PC-3 (cell line): ENCODE measurements at regions of chr5 and their contacts with region 1.

Region 1: GRCh38 chr5:78269088-78269703 is 25.3 kb downstream of the AP3B1 start:
- DNase-seq: peak; percentile 34
- ATAC-seq: peak; percentile 43; the same call in 1 of the 2 replicates
- H3K4me3 ChIP-seq: no peak overlapping the region
- H3K27ac ChIP-seq: no peak overlapping the region
- H3K4me1 ChIP-seq: no peaks in the 10 kb centered on the region
- H3K27me3 ChIP-seq: no peaks in the 10 kb centered on the region
- CTCF ChIP-seq: peak; percentile 57

Region 2: DNA sequence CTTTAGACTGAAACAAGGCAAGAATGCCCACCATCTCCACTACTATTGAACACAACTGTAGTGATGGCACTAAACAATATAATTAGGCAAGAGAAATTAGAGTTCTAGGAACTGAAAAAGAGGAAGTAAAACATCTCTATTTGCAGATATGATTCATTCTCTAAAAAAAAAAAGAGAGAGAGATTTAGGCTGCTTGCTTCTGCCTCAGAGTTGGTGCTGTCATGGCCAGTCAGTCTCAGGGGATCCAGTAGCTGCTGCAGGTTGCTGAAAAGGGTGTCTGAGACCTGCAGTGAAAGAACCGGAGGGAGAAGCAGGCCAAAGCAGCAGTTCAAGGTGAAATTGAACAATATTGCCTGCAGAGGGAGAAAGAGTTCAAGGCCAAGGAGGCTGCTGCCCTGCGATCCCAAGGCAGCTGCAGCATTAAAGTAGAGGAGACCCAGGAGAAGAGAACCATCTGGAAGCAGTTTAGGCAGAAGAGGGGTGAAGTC is 47.2 kb before region 1 on chr5:
- CTCF ChIA-PET with region 1: no interaction called
- POLR2A ChIA-PET with region 1: no interaction called
- intact Hi-C with region 1: loop called (anchors 2 kb)
- DNase-seq: peak; percentile 2
- ATAC-seq: peak; percentile 33; the same call in 1 of the 2 replicates
- H3K4me3 ChIP-seq: no peak overlapping the region
- H3K27ac ChIP-seq: no peak overlapping the region
- H3K4me1 ChIP-seq: no peaks in the 10 kb centered on the region
- H3K27me3 ChIP-seq: no peaks in the 10 kb centered on the region
- CTCF ChIP-seq: peak; percentile 29; the same call in 1 of the 2 replicates

Region 3: GRCh38 chr5:78235289-78235688 is 33.9 kb before region 1 on chr5:
- CTCF ChIA-PET with region 1: no interaction called
- POLR2A ChIA-PET with region 1: no interaction called
- intact Hi-C with region 1: no loop called
- DNase-seq: no peak
- ATAC-seq: no peak
- H3K4me3 ChIP-seq: no peak overlapping the region
- H3K27ac ChIP-seq: no peak overlapping the region
- H3K4me1 ChIP-seq: no peaks in the 10 kb centered on the region
- H3K27me3 ChIP-seq: no peaks in the 10 kb centered on the region
- CTCF ChIP-seq: no peak

Region 4: GRCh38 chr5:78253201-78253600 is 16.0 kb before region 1 on chr5:
- CTCF ChIA-PET with region 1: no interaction called
- POLR2A ChIA-PET with region 1: no interaction called
- intact Hi-C with region 1: no loop called
- DNase-seq: no peak
- ATAC-seq: no peak
- H3K4me3 ChIP-seq: no peak overlapping the region
- H3K27ac ChIP-seq: no peak overlapping the region
- H3K4me1 ChIP-seq: no peaks in the 10 kb centered on the region
- H3K27me3 ChIP-seq: no peaks in the 10 kb centered on the region
- CTCF ChIP-seq: no peak

Region 5: DNA sequence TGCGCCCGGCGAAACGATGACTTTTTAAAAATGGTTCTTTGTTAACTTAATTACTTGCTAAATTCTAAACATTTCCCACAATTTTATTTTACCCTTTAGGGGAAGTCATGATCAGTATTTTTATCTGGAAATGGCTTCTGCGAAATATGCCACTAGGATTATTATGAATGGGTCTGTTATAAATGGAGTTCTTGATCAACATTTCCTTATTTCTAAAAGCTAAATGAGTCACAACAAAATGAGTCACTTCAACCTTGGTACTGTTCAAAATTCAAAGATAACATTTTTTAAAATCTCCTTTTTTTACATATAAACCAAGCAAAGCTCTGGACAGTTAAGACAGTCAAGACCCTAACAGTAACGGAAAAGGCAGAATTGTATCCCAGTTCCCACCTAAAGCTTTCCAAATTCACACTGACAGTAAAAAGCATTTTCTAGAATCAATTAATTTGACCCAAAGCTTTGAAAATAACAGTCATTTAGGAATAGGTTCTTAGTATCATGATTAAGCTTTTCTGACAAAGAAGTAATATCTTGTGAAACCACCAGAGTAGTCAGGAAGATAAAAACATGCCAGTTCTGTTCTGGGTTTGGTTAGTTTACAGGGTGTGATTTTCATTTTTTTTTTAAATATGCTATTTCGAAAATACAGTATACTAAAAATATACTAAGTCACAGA is 297.7 kb after region 1 on chr5:
- CTCF ChIA-PET with region 1: no interaction called
- POLR2A ChIA-PET with region 1: no interaction called
- intact Hi-C with region 1: no loop called
- DNase-seq: peak; percentile 23
- ATAC-seq: peak; percentile 42
- H3K4me3 ChIP-seq: no peak overlapping the region
- H3K27ac ChIP-seq: peak overlapping the region; percentile 22
- H3K4me1 ChIP-seq: peaks cover 16% of the 10 kb centered on the region
- H3K27me3 ChIP-seq: no peaks in the 10 kb centered on the region
- CTCF ChIP-seq: no peak